Mammary epithelial cell (primary cell): ENCODE measurements at regions of chr7 and their contacts with region 1.

Region 1: GRCh38 chr7:100049441-100050311 is at the start of gene ZSCAN21:
- DNase-seq: peak; percentile 79
- H3K4me3 ChIP-seq: peak within 1 kb of the TSS; percentile 85 to 97 (median 86)
- H3K27ac ChIP-seq: peak within 1 kb of the TSS; percentile 86
- H3K4me1 ChIP-seq: peaks cover 6% of the 10 kb centered on the region
- H3K27me3 ChIP-seq: no peaks in the 10 kb centered on the region
- CTCF ChIP-seq: peak in 1 of 2 donors; percentile 24
- total RNA-seq, gene ZSCAN21: 10.8 to 15.0 TPM

Region 2: GRCh38 chr7:99910976-99911375 is 138.7 kb before region 1 on chr7:
- CTCF ChIA-PET with region 1: no interaction called
- dilution Hi-C with region 1: no loop called
- in situ Hi-C with region 1: loop called in 1 of 2 experiments (anchors 10 kb)
- intact Hi-C with region 1: loop called (anchors 1 kb)
- DNase-seq: no peak
- H3K4me3 ChIP-seq: no peak overlapping the region
- H3K27ac ChIP-seq: no peak overlapping the region
- H3K4me1 ChIP-seq: peaks cover 8% of the 10 kb centered on the region
- H3K27me3 ChIP-seq: no peaks in the 10 kb centered on the region
- CTCF ChIP-seq: no peak

Region 3: DNA sequence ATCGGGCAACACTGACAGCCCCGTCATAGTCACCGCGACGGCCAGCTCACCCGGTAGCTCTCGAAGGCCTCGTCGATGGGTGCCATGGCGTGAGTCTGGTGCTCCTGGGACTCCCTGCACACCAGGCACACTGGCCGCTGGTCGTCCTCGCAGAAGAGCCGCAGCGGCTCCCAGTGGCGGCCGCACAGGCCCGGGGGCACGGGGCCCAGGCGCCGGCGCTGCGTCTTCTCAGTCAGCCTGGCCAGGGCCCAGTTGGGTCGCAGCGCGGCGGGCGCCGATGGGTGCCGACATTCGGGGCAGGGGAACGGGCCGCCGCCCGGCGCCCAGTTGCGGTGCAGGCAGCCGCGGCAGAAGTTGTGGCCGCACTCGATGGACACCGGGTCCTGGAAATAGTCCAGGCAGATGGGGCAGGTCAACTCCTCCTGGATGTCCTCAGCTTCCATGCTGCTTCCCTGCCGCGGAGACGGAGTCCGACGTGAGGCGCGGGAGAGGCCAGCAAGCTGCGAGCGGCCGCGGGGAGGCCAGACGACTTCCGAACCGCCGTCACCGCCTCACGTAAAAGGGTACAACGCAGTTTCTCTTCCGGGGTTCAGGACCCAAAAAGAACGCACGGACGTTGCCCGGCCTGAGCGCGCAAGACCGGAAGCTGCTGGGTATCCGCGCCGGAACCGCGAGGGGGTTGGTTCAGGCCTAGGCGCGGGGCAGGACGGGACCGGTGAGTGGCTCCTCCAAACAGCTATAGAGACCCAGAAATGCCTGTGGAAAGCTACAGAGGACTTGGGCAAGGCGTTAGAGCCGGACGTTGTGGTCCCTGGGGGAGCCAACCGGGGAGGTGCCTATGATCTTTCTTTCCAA is 130.5 kb before region 1 on chr7 and contains the start of gene TRIM4:
- CTCF ChIA-PET with region 1: no interaction called
- dilution Hi-C with region 1: no loop called
- in situ Hi-C with region 1: loop called in 1 of 2 experiments (anchors 10 kb)
- intact Hi-C with region 1: no loop called
- DNase-seq: peak; percentile 94
- H3K4me3 ChIP-seq: peak within 1 kb of the TSS; percentile 79 to 90 (median 86)
- H3K27ac ChIP-seq: peak within 1 kb of the TSS; percentile 73
- H3K4me1 ChIP-seq: peaks cover 26% of the 10 kb centered on the region
- H3K27me3 ChIP-seq: no peaks in the 10 kb centered on the region
- CTCF ChIP-seq: peak; percentile 5 to 49
- total RNA-seq, gene TRIM4: 23.2 to 24.5 TPM

Region 4: GRCh38 chr7:100015232-100016209 is 34.2 kb before region 1 on chr7 and contains the start of gene ZKSCAN1:
- CTCF ChIA-PET with region 1: interaction called, 4 read pairs
- dilution Hi-C with region 1: no loop called
- in situ Hi-C with region 1: no loop called
- intact Hi-C with region 1: loop called (anchors 5 kb)
- DNase-seq: peak; percentile 86
- H3K4me3 ChIP-seq: peak within 1 kb of the TSS; percentile 68 to 98 (median 81)
- H3K27ac ChIP-seq: peak within 1 kb of the TSS; percentile 87
- H3K4me1 ChIP-seq: peaks cover 20% of the 10 kb centered on the region
- H3K27me3 ChIP-seq: no peaks in the 10 kb centered on the region
- CTCF ChIP-seq: no peak
- total RNA-seq, gene ZKSCAN1: 42.7 to 80.8 TPM

Region 5: GRCh38 chr7:100132697-100133151 is 83.0 kb after region 1 on chr7:
- CTCF ChIA-PET with region 1: no interaction called
- dilution Hi-C with region 1: no loop called
- in situ Hi-C with region 1: no loop called
- intact Hi-C with region 1: no loop called
- DNase-seq: peak; percentile 42
- H3K4me3 ChIP-seq: no peak overlapping the region
- H3K27ac ChIP-seq: no peak overlapping the region
- H3K4me1 ChIP-seq: peaks cover 4% of the 10 kb centered on the region
- H3K27me3 ChIP-seq: no peaks in the 10 kb centered on the region
- CTCF ChIP-seq: peak; percentile 91 to 97